ENCODE measurements at regions of chr19 and their contacts with region 1.

Region 1: GRCh38 chr19:46030812-46031550 is 8.1 kb upstream of the PGLYRP1 start:
- DNase-seq: no peak
- H3K4me3 ChIP-seq: no peak overlapping the region
- CTCF ChIP-seq: no peak

Region 2: DNA sequence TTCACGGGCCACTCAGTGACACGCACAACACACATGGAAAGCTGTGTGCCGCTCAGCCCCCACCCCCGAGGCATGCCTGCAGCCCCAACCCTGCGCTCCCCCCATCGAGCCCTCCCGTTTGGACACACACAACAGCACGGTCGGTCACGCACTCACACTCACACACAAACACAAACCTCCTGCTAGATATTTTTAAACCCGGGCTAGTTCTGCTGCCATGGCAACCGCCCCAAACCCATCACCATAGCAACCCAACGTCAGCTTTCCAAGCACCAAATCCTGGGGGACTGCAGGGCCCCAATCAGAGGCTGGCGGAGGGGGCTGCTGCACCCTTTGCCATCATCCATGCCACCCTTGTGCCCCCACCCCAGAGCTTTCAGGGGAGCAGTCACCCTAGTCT is 54.8 kb before region 1 on chr19:
- CTCF ChIA-PET with region 1: no interaction called
- POLR2A ChIA-PET with region 1: no interaction called
- DNase-seq: no peak
- H3K4me3 ChIP-seq: no peak overlapping the region
- CTCF ChIP-seq: no peak

Region 3: GRCh38 chr19:46049597-46049996 is 18.6 kb after region 1 on chr19:
- CTCF ChIA-PET with region 1: interaction called, 48 read pairs
- POLR2A ChIA-PET with region 1: interaction called, 5 read pairs
- DNase-seq: no peak
- H3K4me3 ChIP-seq: no peak overlapping the region
- CTCF ChIP-seq: no peak

Region 4: GRCh38 chr19:46221981-46222610 is 191.1 kb after region 1 on chr19:
- CTCF ChIA-PET with region 1: interaction called, 11 read pairs
- POLR2A ChIA-PET with region 1: no interaction called
- DNase-seq: no peak
- H3K4me3 ChIP-seq: no peak overlapping the region
- CTCF ChIP-seq: no peak

Measured in AG04449 (cell line).